K562 (cell line): ENCODE measurements at regions of chr6 and their contacts with region 1.

Region 1: DNA sequence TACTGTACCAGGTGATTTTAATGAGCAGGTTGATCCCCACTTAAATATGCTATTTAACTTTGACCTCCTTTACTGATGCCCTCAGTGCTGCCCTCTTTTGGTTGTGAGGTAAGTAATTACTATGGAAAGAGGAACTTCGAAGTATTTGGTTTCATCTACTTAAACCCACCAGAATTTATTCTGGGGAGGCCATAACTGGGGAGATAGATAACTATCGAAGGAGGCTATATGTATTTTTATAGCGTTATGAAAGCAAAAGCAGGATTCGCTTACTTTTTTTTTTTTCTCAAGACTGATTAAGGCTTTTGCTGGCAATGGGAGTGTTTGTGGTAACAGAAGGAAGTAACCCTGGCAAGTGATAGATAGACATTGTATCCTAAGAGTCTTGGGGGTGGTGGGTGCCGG is 168.9 kb upstream of the CENPW start:
- DNase-seq: peak in 2 of 4 experiments; percentile 51 to 76
- ATAC-seq: peak; percentile 91
- H3K4me3 ChIP-seq: no peak overlapping the region
- H3K27ac ChIP-seq: no peak overlapping the region
- H3K4me1 ChIP-seq: peaks cover 0 to 11% of the 10 kb centered on the region in 2 experiments; a peak in 2 of 5 replicates
- H3K27me3 ChIP-seq: no peaks in the 10 kb centered on the region
- CTCF ChIP-seq: peak; percentile 49 to 71 (median 70); a peak in 5 of 6 replicates
- EP300 ChIP-seq: no peak
- POLR2A ChIP-seq: no peak
- RAD21 ChIP-seq: peak; percentile 63 to 75

Region 2: GRCh38 chr6:125995972-125996580 is 174.9 kb before region 1 on chr6:
- CTCF ChIA-PET with region 1: no interaction called
- POLR2A ChIA-PET with region 1: no interaction called
- in situ Hi-C with region 1: no loop called
- intact Hi-C with region 1: loop called (anchors 1 kb)
- DNase-seq: peak; percentile 70 to 82 (median 74)
- ATAC-seq: peak; percentile 93
- H3K4me3 ChIP-seq: no peak overlapping the region
- H3K27ac ChIP-seq: no peak overlapping the region
- H3K4me1 ChIP-seq: peaks cover 0 to 4% of the 10 kb centered on the region in 2 experiments; a peak in 1 of 5 replicates
- H3K27me3 ChIP-seq: no peaks in the 10 kb centered on the region
- CTCF ChIP-seq: peak; percentile 85 to 97 (median 93)
- EP300 ChIP-seq: no peak
- POLR2A ChIP-seq: no peak
- RAD21 ChIP-seq: peak; percentile 80 to 88

Region 3: GRCh38 chr6:126033696-126034095 is 137.3 kb before region 1 on chr6:
- CTCF ChIA-PET with region 1: interaction called, 4 read pairs
- POLR2A ChIA-PET with region 1: no interaction called
- in situ Hi-C with region 1: no loop called
- intact Hi-C with region 1: loop called (anchors 1 kb)
- DNase-seq: peak; percentile 28 to 76 (median 51)
- ATAC-seq: peak; percentile 99
- H3K4me3 ChIP-seq: no peak overlapping the region
- H3K27ac ChIP-seq: peak overlapping the region; percentile 18; the same call in 1 of the 3 replicates
- H3K4me1 ChIP-seq: peaks cover 0 to 8% of the 10 kb centered on the region in 2 experiments; a peak in 2 of 5 replicates
- H3K27me3 ChIP-seq: no peaks in the 10 kb centered on the region
- CTCF ChIP-seq: peak; percentile 60 to 81 (median 75)
- EP300 ChIP-seq: no peak
- POLR2A ChIP-seq: no peak
- RAD21 ChIP-seq: peak; percentile 95

Region 4: GRCh38 chr6:126054258-126054702 is 116.7 kb before region 1 on chr6:
- CTCF ChIA-PET with region 1: no interaction called
- POLR2A ChIA-PET with region 1: interaction called, 3 read pairs
- in situ Hi-C with region 1: no loop called
- intact Hi-C with region 1: loop called (anchors 5 kb)
- DNase-seq: peak in 3 of 4 experiments; percentile 16 to 79 (median 40)
- ATAC-seq: peak; percentile 76
- H3K4me3 ChIP-seq: no peak overlapping the region
- H3K27ac ChIP-seq: peak overlapping the region; percentile 66; the same call in 2 of the 3 replicates
- H3K4me1 ChIP-seq: peaks cover 9 to 61% of the 10 kb centered on the region in 2 experiments
- H3K27me3 ChIP-seq: no peaks in the 10 kb centered on the region
- CTCF ChIP-seq: no peak
- EP300 ChIP-seq: peak; percentile 74
- POLR2A ChIP-seq: no peak
- RAD21 ChIP-seq: peak in 1 of 2 experiments; percentile 26; a peak in 2 of 4 replicates

Region 5: DNA sequence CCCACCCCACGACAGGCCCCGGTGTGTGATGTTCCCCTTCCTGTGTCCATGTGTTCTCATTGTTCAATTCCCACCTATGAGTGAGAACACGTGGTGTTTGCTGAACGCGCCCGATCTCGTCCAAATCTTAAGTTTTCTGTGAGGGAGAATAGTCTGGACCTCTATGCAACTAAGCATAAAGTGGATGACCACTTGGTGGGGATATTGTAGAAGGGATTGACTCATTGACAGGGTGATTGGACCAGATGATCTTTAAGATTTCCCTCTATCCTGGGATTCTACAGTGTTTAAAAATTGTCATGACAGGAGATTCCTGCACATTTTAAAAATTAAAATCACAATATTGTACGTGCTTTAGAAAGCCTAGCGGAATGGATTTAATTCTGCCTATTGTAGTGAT is 43.3 kb before region 1 on chr6:
- CTCF ChIA-PET with region 1: no interaction called
- POLR2A ChIA-PET with region 1: no interaction called
- in situ Hi-C with region 1: no loop called
- intact Hi-C with region 1: loop called (anchors 2 kb)
- DNase-seq: no peak
- ATAC-seq: peak; percentile 19; the same call in 1 of the 3 replicates
- H3K4me3 ChIP-seq: no peak overlapping the region
- H3K27ac ChIP-seq: no peak overlapping the region
- H3K4me1 ChIP-seq: peaks cover 0 to 8% of the 10 kb centered on the region in 2 experiments; a peak in 2 of 5 replicates
- H3K27me3 ChIP-seq: no peaks in the 10 kb centered on the region
- CTCF ChIP-seq: peak in 2 of 3 experiments; percentile 11 to 40; a peak in 2 of 6 replicates
- EP300 ChIP-seq: no peak
- POLR2A ChIP-seq: no peak
- RAD21 ChIP-seq: peak in 1 of 2 experiments; percentile 55; a peak in 2 of 4 replicates

Region 6: GRCh38 chr6:126312013-126312663 is 141.2 kb after region 1 on chr6:
- CTCF ChIA-PET with region 1: no interaction called
- POLR2A ChIA-PET with region 1: no interaction called
- in situ Hi-C with region 1: no loop called
- intact Hi-C with region 1: loop called (anchors 10 kb)
- DNase-seq: peak; percentile 32 to 50 (median 39)
- ATAC-seq: peak; percentile 96
- H3K4me3 ChIP-seq: no peak overlapping the region
- H3K27ac ChIP-seq: no peak overlapping the region
- H3K4me1 ChIP-seq: no peaks in the 10 kb centered on the region
- H3K27me3 ChIP-seq: no peaks in the 10 kb centered on the region
- CTCF ChIP-seq: peak; percentile 26 to 43 (median 34); a peak in 3 of 6 replicates
- EP300 ChIP-seq: no peak
- POLR2A ChIP-seq: no peak
- RAD21 ChIP-seq: peak in 1 of 2 experiments; percentile 59; a peak in 3 of 4 replicates

Region 7: GRCh38 chr6:126339796-126340609 is 169.0 kb after region 1 on chr6 and contains the start of gene CENPW:
- CTCF ChIA-PET with region 1: no interaction called
- POLR2A ChIA-PET with region 1: no interaction called
- in situ Hi-C with region 1: no loop called
- intact Hi-C with region 1: loop called (anchors 10 kb)
- DNase-seq: peak; percentile 95 to 97 (median 97)
- ATAC-seq: peak; percentile 87
- H3K4me3 ChIP-seq: peak within 1 kb of the TSS; percentile 87
- H3K27ac ChIP-seq: peak within 1 kb of the TSS; percentile 89
- H3K4me1 ChIP-seq: peaks cover 0 to 8% of the 10 kb centered on the region in 2 experiments; a peak in 2 of 5 replicates
- H3K27me3 ChIP-seq: no peaks in the 10 kb centered on the region
- CTCF ChIP-seq: no peak
- EP300 ChIP-seq: peak; percentile 49; the same call in 1 of the 2 replicates
- POLR2A ChIP-seq: peak; percentile 85
- RAD21 ChIP-seq: no peak
- polyA plus RNA-seq, gene CENPW: 240 to 285 TPM

Region 8: DNA sequence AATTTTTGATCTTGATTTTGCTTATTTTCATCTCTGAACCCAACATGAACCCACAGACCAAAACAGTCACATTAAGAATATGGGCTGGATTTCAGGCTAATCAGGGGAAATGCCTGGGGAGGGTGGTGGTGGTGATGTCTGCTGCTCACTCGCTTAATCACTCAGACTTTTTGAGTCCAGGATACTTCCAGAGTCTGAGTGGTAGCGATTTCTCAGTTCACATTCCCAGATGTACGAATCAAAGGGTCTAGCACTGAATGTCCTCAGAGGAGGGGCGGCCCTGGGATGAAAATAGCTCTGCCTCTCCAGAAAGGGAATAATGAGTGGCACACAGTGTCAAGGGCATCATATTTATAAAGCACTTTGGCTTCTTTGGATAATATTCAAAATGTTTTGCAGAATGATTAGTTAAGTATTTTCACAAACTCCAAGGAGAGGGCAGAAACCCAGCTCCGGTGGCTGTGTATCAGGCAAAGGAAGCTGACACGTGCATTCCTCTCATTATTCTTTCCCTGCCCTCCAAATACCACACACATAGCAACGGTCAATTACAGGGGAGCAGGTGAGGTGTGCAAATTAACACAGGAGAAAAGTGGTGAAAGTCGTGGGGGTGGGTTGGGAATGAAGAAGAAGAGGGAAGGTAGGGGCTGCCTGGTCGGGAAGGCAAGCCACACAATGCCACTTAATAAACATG is 602.3 kb after region 1 on chr6:
- CTCF ChIA-PET with region 1: no interaction called
- POLR2A ChIA-PET with region 1: no interaction called
- in situ Hi-C with region 1: no loop called
- intact Hi-C with region 1: no loop called
- DNase-seq: no peak
- ATAC-seq: no peak
- H3K4me3 ChIP-seq: no peak overlapping the region
- H3K27ac ChIP-seq: no peak overlapping the region
- H3K4me1 ChIP-seq: no peaks in the 10 kb centered on the region
- H3K27me3 ChIP-seq: no peaks in the 10 kb centered on the region
- CTCF ChIP-seq: no peak
- EP300 ChIP-seq: no peak
- POLR2A ChIP-seq: no peak
- RAD21 ChIP-seq: no peak